H1 (cell line): ENCODE measurements at regions of chr7 and their contacts with region 1.

Region 1: DNA sequence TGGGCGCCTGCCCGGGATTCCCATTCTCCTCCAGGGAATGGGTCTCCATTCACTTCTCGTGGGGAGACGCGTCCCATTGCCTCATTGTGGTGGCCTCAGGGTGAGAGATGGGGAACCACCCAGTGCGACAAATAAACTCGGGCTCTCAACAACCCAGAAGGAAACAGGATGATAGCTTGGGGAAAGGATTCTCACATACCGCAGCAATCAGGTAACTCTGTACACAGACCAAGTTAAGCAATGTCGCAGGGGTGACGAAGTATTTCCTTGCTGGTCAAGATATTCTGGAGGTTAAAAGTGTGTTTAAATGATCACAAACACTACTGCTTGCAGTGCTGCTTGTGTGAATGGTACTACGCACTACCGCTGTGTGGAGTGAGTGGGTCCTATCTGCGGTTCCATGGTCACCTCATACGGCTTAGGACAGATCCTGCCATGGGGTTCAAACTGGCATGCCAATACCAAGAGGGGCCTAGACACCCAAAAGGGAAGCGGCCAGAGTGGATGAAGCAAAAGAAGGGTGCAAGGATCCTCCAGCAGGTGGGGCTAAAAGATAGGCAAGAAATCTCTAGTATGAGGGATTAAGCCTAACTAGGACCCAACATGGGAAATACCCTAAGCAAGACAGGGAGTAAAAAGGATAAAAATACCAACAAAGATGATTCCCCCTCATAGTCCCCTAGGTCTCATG is 143.8 kb upstream of the TMEM106B start:
- DNase-seq: peak; percentile 56 to 83
- H3K4me3 ChIP-seq: no peak overlapping the region
- H3K27ac ChIP-seq: no peak overlapping the region
- H3K4me1 ChIP-seq: peaks cover 0 to 2% (median under 1%) of the 10 kb centered on the region in 4 experiments; a peak in 3 of 7 replicates
- H3K27me3 ChIP-seq: no peaks in the 10 kb centered on the region
- CTCF ChIP-seq: peak; percentile 45 to 81 (median 79)
- EP300 ChIP-seq: no peak
- POLR2A ChIP-seq: no peak
- RAD21 ChIP-seq: peak; percentile 98

Region 2: DNA sequence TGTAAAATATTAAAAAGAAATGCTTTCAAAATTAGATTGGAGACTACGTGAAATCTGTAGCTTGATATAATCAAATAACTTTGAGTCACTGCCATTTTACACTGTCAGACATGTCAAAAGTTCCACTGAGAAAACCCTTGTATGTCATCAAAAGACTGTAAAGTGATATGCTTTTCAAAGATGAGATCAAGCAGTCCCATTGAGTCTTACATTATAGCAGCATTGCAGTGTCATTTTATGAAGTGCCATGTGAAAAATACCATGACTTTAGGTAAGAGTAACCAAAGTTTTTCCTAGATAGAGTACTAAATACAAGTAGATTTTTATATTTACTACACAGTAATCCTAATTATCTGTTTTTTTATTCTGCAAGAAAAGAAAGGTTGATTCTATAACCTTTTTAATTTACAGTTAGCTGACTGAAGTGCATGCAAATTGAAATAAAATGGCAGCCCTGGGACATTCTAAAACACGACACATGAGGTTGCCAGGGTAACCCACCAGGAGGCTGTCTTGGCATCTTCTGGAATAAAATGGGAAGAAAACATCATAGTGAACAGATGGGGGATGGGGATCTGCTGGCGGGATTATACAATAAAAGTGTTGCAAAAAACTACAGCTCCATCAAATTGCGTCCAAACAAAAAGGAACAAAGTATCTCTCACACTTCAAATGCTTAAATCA is 52.5 kb after region 1 on chr7:
- CTCF ChIA-PET with region 1: interaction called, 11 read pairs
- POLR2A ChIA-PET with region 1: no interaction called
- DNase-seq: no peak
- H3K4me3 ChIP-seq: no peak overlapping the region
- H3K27ac ChIP-seq: no peak overlapping the region
- H3K4me1 ChIP-seq: no peaks in the 10 kb centered on the region; a peak in 1 of 7 replicates
- H3K27me3 ChIP-seq: no peaks in the 10 kb centered on the region
- CTCF ChIP-seq: no peak
- EP300 ChIP-seq: no peak
- POLR2A ChIP-seq: no peak
- RAD21 ChIP-seq: no peak; a peak in 1 of 4 replicates

Region 3: DNA sequence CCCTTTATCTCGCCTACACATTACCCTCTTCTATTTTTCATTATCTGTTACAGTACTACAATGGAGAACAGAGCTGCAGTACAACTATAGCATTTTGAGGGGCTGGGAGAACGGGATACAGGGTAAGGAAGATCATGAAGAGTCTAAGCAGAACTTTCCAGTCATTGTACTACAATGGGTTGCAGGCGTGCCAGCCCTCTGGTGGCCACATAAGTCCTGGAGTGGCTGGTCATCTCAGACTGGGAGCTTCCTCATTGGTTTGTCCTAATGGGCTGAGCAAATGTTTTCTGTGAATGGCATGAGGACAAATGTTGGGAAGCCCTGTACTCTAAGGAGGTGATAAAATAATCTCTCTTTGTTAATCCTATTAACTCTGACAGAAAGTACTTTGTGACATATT is 176.8 kb after region 1 on chr7:
- CTCF ChIA-PET with region 1: interaction called, 10 read pairs
- POLR2A ChIA-PET with region 1: no interaction called
- DNase-seq: peak; percentile 17 to 47
- H3K4me3 ChIP-seq: no peak overlapping the region
- H3K27ac ChIP-seq: no peak overlapping the region
- H3K4me1 ChIP-seq: no peaks in the 10 kb centered on the region
- H3K27me3 ChIP-seq: no peaks in the 10 kb centered on the region
- CTCF ChIP-seq: peak; percentile 62 to 76 (median 74)
- EP300 ChIP-seq: no peak
- POLR2A ChIP-seq: no peak
- RAD21 ChIP-seq: peak; percentile 60 to 71; a peak in 3 of 4 replicates

Region 4: DNA sequence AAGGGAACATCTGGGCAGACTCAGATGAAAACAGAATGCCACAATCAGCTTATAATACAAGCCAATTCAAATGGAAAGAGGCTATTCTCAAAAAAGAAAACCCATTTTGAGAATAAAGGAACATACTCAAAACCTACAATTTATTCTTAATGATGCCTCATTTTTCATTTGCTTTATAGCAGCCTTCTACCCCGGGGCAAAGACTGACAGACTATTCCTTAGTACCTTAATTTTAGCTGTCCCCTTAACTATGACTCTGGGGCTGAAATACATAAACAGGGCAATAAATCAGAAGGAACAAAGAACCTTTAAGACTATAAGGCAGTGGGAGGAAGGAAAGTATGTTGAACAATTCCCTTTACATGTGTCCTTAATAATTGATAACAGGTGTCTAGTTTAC is 220.6 kb after region 1 on chr7:
- CTCF ChIA-PET with region 1: no interaction called
- POLR2A ChIA-PET with region 1: no interaction called
- DNase-seq: no peak
- H3K4me3 ChIP-seq: no peak overlapping the region
- H3K27ac ChIP-seq: no peak overlapping the region
- H3K4me1 ChIP-seq: no peaks in the 10 kb centered on the region
- H3K27me3 ChIP-seq: no peaks in the 10 kb centered on the region
- CTCF ChIP-seq: no peak
- EP300 ChIP-seq: no peak
- POLR2A ChIP-seq: no peak
- RAD21 ChIP-seq: no peak

Region 5: GRCh38 chr7:12322284-12322902 is 255.1 kb after region 1 on chr7:
- CTCF ChIA-PET with region 1: interaction called, 19 read pairs
- POLR2A ChIA-PET with region 1: no interaction called
- DNase-seq: no peak
- H3K4me3 ChIP-seq: no peak overlapping the region
- H3K27ac ChIP-seq: no peak overlapping the region
- H3K4me1 ChIP-seq: peaks cover 0 to 3% (median 0%) of the 10 kb centered on the region in 4 experiments; a peak in 2 of 7 replicates
- H3K27me3 ChIP-seq: no peaks in the 10 kb centered on the region
- CTCF ChIP-seq: peak in 2 of 3 experiments; percentile 27 to 44; a peak in 2 of 4 replicates
- EP300 ChIP-seq: no peak
- POLR2A ChIP-seq: no peak
- RAD21 ChIP-seq: peak; percentile 59 to 76